ENCODE measurements at regions of chr18 and their contacts with region 1.

Region 1: DNA sequence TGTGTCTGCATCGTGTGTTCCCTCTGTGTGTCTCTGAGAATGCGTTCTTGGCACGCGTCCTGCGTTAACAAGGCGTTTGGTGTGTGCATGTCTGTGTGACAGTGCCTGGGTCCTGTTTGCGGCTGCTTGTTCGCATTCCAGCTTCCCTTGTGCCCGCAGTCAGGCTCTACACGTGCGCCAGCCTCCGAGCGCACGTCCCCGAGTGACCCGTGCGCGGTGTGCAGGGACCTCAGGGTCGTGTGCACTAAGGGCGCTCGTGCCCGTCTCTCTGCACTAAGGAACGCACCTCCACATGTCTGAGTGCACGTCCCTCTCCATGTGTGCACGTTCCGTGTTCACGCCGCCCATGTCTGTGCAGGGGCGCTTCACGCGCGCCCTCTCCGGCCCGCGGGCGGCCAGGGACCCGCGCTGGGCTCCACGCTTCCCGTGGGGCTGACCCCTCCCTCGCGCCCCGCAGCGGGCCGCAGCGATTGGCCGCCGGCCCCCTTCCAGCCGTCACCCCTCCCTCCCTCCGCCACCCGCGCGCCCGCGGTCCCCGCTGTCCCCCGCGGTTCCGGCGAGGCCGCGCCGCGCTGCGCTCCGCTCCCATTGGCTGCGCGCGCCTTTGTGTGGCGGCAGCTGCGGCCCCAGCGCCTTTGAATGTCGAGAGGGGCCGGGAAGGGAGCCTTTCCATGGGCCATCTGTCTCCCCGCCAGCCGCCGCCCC is 229.4 kb downstream of the HAUS1 start:
- DNase-seq: no peak
- ATAC-seq: peak; percentile 47 to 49
- H3K4me3 ChIP-seq: peak overlapping the region; percentile 50 to 55 (median 54)
- H3K27ac ChIP-seq: no peak overlapping the region
- H3K4me1 ChIP-seq: peaks cover 0 to 4% of the 10 kb centered on the region in 2 donors
- H3K27me3 ChIP-seq: no peaks in the 10 kb centered on the region
- CTCF ChIP-seq: no peak
- POLR2A ChIP-seq: no peak

Region 2: GRCh38 chr18:45133276-45133675 is 1200.3 kb before region 1 on chr18:
- in situ Hi-C with region 1: no loop called
- intact Hi-C with region 1: loop called (anchors 5 kb)
- DNase-seq: no peak
- ATAC-seq: no peak
- H3K4me3 ChIP-seq: no peak overlapping the region
- H3K27ac ChIP-seq: no peak overlapping the region
- H3K4me1 ChIP-seq: no peaks in the 10 kb centered on the region
- H3K27me3 ChIP-seq: no peaks in the 10 kb centered on the region
- CTCF ChIP-seq: no peak
- POLR2A ChIP-seq: no peak

Region 3: DNA sequence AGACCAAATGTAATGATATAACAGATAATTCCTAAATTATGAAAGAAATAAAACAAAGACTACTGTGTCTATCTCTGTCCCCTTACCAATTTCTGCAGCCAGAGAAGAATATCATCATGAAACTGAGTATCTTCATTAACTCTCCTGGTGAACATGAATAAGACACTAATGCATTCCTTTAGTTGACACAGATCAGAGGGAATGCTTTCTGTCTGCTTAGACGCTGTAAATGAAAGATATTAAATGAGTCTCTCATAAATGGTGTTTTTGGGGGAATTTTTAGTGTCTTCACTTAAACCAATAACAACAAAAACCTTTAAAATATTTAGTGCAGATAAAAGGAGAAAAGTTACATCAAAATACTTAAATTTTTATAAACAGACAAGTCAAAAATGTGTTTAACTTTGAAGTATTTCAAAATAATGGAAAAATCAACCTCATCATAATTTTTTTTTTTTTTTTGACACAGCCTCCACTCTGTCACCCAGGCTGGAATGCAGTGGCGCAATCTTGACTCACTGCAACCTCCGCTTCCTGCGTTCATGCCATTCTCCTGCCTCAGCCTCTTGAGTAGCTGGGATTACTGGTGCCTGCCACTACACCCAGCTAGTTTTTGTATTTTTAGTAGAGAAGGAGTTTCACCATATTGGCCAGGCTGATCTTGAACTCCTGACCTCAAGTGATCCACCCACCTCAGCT is 382.4 kb before region 1 on chr18:
- in situ Hi-C with region 1: no loop called
- intact Hi-C with region 1: no loop called
- DNase-seq: peak in 1 of 2 donors; percentile 34
- ATAC-seq: no peak
- H3K4me3 ChIP-seq: no peak overlapping the region
- H3K27ac ChIP-seq: no peak overlapping the region
- H3K4me1 ChIP-seq: peaks cover 11 to 12% of the 10 kb centered on the region in 2 donors
- H3K27me3 ChIP-seq: no peaks in the 10 kb centered on the region
- CTCF ChIP-seq: no peak
- POLR2A ChIP-seq: no peak

Region 4: GRCh38 chr18:46411867-46412690 is 78.5 kb after region 1 on chr18:
- in situ Hi-C with region 1: no loop called
- intact Hi-C with region 1: loop called (anchors 5 kb)
- DNase-seq: peak; percentile 74 to 94
- ATAC-seq: peak; percentile 82 to 84
- H3K4me3 ChIP-seq: peak overlapping the region in 1 of 4 donors; percentile 23
- H3K27ac ChIP-seq: peak overlapping the region; percentile 91 to 98 (median 96)
- H3K4me1 ChIP-seq: peaks cover 76 to 78% of the 10 kb centered on the region in 2 donors
- H3K27me3 ChIP-seq: no peaks in the 10 kb centered on the region
- CTCF ChIP-seq: no peak
- POLR2A ChIP-seq: peak in 1 of 2 donors; percentile 72

Measured in gastrocnemius medialis (tissue), 4 donors.